ENCODE measurements at regions of chr12 and their contacts with region 1.

Region 1: GRCh38 chr12:121773011-121773777 is 20.3 kb downstream of the RHOF start:
- DNase-seq: peak; percentile 75 to 84 (median 82)
- ATAC-seq: peak; percentile 86
- H3K4me3 ChIP-seq: no peak overlapping the region
- H3K4me1 ChIP-seq: peaks cover 4% of the 10 kb centered on the region
- CTCF ChIP-seq: peak; percentile 85

Region 2: DNA sequence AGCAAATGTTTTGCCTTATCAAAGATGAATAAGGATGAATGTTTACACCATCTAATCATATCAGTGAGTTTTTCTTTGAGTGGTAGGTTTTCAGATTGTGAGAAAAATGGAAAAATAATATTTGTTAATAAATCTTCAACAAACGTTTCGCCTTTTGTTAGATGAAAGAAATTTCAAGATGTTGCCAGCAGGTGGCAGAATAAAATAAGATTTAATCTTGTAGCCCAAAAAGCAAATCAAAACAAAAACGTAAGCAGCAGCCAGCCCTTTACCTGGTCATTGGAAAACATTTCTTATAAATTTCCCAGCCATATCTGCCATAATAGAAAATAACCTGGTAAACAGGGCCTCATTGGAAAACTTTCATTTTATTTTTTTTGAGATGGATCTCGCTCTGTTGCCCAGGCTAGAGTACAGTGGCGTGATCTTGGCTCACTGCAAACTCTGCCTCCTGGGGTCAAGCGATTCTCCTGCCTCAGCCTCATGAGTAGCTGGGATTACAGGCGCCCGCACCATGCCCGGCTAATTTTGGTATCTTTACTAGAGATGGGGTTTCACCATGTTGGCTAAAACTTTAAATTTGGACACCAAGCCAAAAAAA is 76.0 kb before region 1 on chr12:
- intact Hi-C with region 1: loop called (anchors 5 kb)
- DNase-seq: peak in 1 of 3 donors; percentile 80
- ATAC-seq: no peak
- H3K4me3 ChIP-seq: no peak overlapping the region
- H3K4me1 ChIP-seq: no peaks in the 10 kb centered on the region
- CTCF ChIP-seq: peak; percentile 11

Measured in mucosa of descending colon (tissue), 3 donors.